CD8-positive, alpha-beta T cell (primary cell): ENCODE measurements at regions of chr9 and their contacts with region 1.

Region 1: DNA sequence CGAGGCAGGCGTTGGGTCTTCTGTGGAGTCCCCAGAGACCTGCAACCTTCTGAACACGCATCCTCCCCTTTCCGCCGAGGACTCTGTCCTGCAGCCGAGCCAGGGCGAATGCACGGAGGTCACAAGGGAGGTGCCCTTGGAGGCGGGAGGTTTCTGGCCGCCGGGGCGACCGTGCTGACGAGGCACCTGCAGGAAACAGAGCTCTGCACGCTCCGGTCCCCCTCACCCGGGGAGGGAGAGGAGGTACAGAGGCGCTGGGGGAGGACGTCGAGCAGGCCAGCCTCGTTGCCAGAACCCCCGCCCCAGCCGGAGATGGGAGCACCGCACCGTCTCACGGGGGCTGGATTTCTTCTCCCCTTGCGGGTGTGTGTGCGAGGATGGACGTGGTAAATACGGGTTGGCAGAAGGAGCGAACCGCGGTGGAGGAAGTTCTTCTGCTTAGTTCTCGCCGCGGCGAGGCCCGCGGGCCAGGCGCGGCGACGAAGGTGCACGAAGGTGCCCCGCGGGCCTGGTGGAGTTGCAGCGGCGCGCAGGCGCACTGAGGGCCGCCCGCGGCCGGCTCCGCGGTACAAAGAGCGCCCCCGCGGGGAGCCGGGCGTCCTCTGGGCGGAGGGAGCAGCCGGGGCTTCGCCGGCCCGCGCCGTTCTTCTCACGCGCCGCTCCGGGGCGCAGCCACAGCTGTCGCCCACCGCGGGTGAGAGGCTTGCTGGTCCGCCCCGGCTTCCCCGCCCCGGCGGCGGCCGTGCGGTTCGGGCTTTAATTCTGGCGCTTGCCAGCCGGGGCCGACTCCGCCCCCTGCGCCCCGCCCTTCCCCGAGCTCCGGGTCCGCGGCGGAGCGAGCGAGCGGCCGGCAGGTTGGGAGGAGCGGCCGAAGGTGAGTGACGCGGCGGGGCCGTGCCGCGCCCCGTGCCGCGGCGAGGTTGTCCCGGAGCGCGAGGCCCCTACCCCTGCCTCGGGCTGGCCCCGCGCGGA is 289.5 kb downstream of the DOCK8 start:
- DNase-seq: peak; percentile 42 to 89 (median 69)
- ATAC-seq: peak; percentile 83
- H3K4me3 ChIP-seq: peak within 1 kb of the TSS; percentile 64 to 90
- H3K4me3 Mint-ChIP-seq: peak within 1 kb of the TSS; percentile 84
- H3K27ac ChIP-seq: peak within 1 kb of the TSS in 1 of 2 experiments; percentile 3
- H3K27ac Mint-ChIP-seq: no peak within 1 kb of the TSS
- H3K4me1 ChIP-seq: peaks cover 12% of the 10 kb centered on the region
- H3K4me1 Mint-ChIP-seq: peaks cover 9% of the 10 kb centered on the region
- H3K27me3 ChIP-seq: no peaks in the 10 kb centered on the region
- H3K27me3 Mint-ChIP-seq: peaks cover 13% of the 10 kb centered on the region
- CTCF ChIP-seq: peak; percentile 21

Region 2: DNA sequence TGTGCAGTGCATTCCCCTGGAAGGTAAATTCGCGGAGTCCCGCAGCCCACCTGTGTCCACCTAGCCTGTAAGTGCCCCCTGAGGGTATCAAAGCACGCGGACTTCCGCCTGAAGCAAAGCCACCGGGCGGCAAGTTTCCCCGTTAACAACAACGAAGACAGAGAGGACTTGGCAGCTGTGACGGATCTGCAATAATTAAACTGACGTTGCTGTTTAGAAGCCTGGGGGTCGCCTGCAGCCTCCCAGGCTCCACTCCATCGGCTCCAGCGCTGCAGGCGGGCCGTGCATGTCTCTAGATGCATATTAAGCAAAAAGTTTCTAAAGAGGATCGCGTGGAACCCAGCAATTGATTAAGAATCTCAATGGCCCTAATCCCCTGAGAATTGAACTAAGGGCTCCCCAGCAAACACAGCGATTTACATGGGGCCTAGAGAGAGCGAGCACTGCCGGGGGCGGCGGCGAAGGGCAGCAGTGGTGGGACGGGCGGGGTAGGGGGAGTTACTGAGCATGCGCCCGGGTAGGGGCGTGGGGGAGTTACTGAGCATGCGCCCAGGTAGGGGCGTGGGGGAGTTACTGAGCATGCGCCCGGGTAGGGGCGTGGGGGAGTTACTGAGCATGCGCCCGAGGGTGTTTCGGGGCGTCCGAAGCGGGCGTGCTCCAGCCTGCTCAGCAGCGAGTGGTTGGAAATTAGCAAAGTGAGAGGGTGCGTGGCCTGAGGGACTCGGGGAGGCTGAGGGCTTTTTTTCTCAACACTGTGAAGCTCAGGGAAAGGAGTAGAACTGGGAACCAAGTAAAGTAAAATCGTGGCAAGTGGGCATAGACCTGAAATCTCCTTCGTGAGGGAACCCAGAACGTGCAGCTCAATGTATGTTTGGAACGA is 34.3 kb before region 1 on chr9:
- CTCF ChIA-PET with region 1: interaction called, 3 read pairs
- POLR2A ChIA-PET with region 1: interaction called, 12 read pairs
- intact Hi-C with region 1: loop called (anchors 1 to 2 kb)
- DNase-seq: peak; percentile 69 to 97 (median 91)
- ATAC-seq: peak; percentile 94
- H3K4me3 ChIP-seq: peak overlapping the region; percentile 69 to 75
- H3K4me3 Mint-ChIP-seq: peak overlapping the region; percentile 94
- H3K27ac ChIP-seq: peak overlapping the region; percentile 34 to 77
- H3K27ac Mint-ChIP-seq: peak overlapping the region; percentile 95
- H3K4me1 ChIP-seq: peaks cover 22% of the 10 kb centered on the region
- H3K4me1 Mint-ChIP-seq: peaks cover 25% of the 10 kb centered on the region
- H3K27me3 ChIP-seq: no peaks in the 10 kb centered on the region
- H3K27me3 Mint-ChIP-seq: no peaks in the 10 kb centered on the region
- CTCF ChIP-seq: no peak

Region 3: GRCh38 chr9:517993-518392 is 13.8 kb after region 1 on chr9:
- CTCF ChIA-PET with region 1: interaction called, 7 read pairs
- POLR2A ChIA-PET with region 1: interaction called, 6 read pairs
- intact Hi-C with region 1: loop called in 1 of 2 experiments (anchors 1 kb)
- DNase-seq: no peak
- ATAC-seq: no peak
- H3K4me3 ChIP-seq: no peak overlapping the region
- H3K4me3 Mint-ChIP-seq: peak overlapping the region; percentile 49
- H3K27ac ChIP-seq: no peak overlapping the region
- H3K27ac Mint-ChIP-seq: peak overlapping the region; percentile 83
- H3K4me1 ChIP-seq: peaks cover 14% of the 10 kb centered on the region
- H3K4me1 Mint-ChIP-seq: peaks cover 34% of the 10 kb centered on the region
- H3K27me3 ChIP-seq: no peaks in the 10 kb centered on the region
- H3K27me3 Mint-ChIP-seq: no peaks in the 10 kb centered on the region
- CTCF ChIP-seq: no peak